ENCODE measurements at regions of chr7 and their contacts with region 1.

Region 1: DNA sequence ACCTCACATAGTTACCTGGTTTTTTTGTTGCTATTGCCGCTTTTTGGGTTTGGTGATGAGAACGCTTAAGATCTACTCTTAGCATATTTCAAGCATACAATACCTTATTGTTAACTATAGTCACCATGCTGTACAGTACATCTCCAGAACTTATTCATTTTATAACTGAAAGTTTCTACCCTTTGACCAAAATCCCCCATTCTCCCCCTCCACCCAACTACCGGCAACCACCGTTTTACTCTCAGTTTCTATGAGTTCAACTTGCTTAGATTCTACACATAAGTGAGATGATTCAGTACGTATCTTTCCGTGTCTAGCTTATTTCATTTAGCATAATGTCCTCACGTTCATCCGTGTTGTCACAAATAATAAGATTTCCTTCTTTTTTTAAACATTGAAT is 86.7 kb upstream of the IL6 start:
- DNase-seq: no peak

Region 2: GRCh38 chr7:22577396-22578001 is 62.8 kb before region 1 on chr7:
- intact Hi-C with region 1: no loop called
- DNase-seq: no peak

Region 3: GRCh38 chr7:22751341-22751740 is 111.1 kb after region 1 on chr7:
- intact Hi-C with region 1: no loop called
- DNase-seq: no peak

Region 4: GRCh38 chr7:23234569-23235296 is 594.5 kb after region 1 on chr7:
- intact Hi-C with region 1: no loop called
- DNase-seq: no peak

Region 5: DNA sequence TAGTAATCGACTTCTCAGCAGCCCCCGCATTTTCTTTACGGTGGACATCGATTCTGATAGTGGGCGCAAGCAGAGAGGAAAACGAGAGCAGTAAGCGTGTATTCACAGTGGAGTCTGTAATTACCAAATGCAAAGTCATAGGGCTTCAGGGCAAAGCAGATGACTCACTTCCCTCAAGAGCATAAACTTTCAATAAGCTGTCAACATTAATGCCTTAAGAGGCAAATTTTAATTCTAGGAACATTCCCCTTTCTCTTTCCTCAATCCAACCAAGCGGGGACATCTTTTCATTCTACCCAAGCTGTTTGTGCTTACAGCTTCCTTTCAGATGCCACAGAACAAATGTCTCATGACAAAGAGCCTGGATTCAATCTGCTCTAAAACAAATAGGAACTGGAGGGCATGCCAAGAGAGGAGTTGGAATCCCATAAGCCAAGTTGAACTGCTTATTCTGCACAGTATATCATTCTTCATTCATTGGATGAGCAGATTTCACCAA is 707.5 kb after region 1 on chr7:
- intact Hi-C with region 1: loop called in 1 of 2 experiments (anchors 10 kb)
- DNase-seq: no peak